ENCODE measurements at regions of chr17 and their contacts with region 1.

Region 1: DNA sequence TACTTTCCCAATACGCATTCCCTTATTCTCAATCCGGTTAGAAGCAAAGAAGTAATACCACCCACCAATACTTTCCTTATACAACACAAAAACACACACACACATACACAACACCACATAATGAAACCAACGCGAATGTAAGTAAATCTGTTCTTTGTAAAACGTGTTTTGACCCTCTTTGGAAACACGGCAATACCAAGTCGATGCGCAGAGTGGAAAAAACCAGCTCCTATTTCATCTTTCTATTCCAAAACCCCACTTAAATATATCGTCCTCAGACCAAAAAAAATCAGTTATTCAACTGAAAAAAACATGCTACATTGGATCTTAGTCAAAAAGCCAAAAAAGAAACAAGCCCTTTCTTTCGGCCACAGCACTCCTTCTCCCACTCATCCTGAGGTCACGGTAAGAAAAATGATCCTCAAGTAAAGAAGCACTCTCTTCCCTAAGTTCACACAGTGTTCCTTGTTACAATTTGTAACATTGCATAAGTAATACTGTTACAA is 31.0 kb upstream of the ARL4D start:
- DNase-seq: peak; percentile 60
- H3K27ac ChIP-seq: peak overlapping the region; percentile 99
- CTCF ChIP-seq: no peak

Region 2: DNA sequence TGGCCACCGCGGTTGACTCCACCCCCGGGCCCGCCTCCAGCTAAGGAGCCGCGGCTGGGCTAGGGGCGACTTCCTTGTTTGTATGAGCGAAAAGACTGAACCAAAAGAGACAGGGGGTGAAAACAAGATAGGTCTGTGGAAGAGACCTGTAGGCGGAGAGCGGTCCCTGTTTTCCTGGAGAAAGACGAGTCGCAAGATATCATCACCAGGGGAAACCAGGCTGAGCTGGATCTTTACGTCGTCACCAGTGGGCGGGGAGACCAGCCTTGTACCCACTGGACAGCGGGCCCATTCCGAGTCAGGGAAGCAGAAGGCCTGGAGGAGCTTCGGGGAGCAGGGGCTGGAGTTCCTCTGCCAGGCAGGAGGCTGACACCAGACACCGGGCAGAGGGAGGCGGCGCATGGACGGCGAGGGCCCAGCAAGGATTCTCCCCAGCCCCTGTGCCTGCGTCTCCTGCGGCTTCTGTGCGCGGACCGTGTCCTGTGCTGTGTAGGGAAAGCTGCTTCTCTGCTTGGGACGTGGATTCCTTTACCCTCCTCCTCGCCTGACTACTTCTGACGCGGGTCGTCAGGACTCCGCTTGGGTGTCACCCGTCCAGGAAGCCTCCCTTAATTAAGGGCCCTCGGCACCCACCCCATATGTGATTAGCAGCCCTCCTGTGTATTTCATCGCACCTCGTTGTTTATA is 20.7 kb after region 1 on chr17:
- CTCF ChIA-PET with region 1: interaction called, 7 read pairs
- POLR2A ChIA-PET with region 1: interaction called, 32 read pairs
- DNase-seq: peak; percentile 77
- H3K27ac ChIP-seq: peak overlapping the region; percentile 98
- CTCF ChIP-seq: no peak

Region 3: DNA sequence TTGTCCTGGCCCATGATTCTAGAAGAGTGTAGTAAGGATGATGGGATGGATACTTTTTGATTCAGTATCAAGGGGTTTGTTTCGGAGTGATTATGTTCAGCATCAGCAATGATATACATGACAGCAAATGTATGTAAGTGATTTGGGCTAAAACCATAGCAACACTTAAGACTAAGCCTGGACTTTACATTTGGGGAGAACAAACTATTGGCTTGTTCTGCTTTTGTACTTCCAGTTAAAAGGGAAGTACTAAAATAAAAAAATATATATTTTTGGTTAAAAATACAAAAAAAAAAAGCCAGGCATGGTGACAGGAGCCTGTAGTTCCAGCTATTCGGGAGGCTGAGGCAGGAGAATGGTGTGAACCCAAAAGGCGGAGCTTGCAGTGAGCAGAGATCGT is 95.5 kb after region 1 on chr17:
- CTCF ChIA-PET with region 1: no interaction called
- POLR2A ChIA-PET with region 1: no interaction called
- DNase-seq: no peak
- H3K27ac ChIP-seq: no peak overlapping the region
- CTCF ChIP-seq: no peak